Activated CD4-positive, alpha-beta T cell treated with anti-CD3 and anti-CD28 coated beads for 36 hours (primary cell): ENCODE measurements at regions of chr6 and their contacts with region 1.

Region 1: GRCh38 chr6:89952686-89953085 is 58.4 kb downstream of the GJA10 start:
- DNase-seq: peak; percentile 66
- ATAC-seq: peak; percentile 60
- H3K4me3 Mint-ChIP-seq: no peak overlapping the region
- H3K27ac Mint-ChIP-seq: peak overlapping the region; percentile 79
- H3K4me1 Mint-ChIP-seq: peaks cover 75% of the 10 kb centered on the region
- H3K27me3 Mint-ChIP-seq: no peaks in the 10 kb centered on the region

Region 2: GRCh38 chr6:89984926-89985750 is 32.5 kb after region 1 on chr6:
- CTCF ChIA-PET with region 1: interaction called, 4 read pairs
- POLR2A ChIA-PET with region 1: no interaction called
- intact Hi-C with region 1: loop called in 1 of 2 experiments (anchors 5 kb)
- DNase-seq: no peak
- ATAC-seq: no peak
- H3K4me3 Mint-ChIP-seq: no peak overlapping the region
- H3K27ac Mint-ChIP-seq: peak overlapping the region; percentile 68
- H3K4me1 Mint-ChIP-seq: peaks cover 72% of the 10 kb centered on the region
- H3K27me3 Mint-ChIP-seq: no peaks in the 10 kb centered on the region

Region 3: DNA sequence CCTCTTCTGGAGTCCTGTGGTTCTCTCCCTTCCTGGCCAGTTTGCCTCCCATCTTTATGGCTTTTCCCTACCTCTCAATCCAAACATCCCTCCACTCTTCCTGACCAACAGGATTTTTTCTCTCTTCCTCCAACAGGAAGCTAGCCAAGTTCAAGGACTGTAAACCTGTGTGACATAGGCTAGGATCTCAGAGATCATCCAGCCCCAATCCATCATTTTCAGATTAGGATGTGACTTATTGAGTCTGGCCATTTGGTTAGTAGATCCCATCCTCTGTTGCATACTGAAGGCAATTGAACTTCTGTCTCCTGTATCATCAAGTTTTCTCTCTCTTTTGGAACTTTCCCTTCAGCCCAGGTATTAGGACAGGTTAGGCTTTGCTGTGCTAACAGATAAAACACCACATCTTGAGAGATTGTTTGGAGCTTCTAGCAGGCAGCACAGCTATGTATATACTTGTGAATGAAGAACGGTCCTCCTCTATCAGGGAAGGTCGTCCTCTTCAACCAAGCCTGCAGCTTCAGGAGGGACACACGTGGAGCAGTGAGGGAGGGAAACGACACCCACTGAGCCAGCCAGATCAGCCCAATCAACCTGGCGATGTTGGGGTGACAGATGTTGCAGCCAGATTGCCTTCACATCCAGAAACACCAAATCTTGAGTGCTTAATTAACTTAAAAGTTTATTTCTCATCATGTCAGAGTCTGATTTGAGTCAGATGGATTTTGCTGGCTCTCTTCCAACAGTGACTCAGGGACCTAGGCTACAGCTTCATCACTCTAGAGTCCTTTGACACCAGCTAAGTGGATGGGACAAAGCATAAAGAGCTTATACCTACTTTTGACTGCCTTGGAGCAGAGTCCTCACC is 48.4 kb after region 1 on chr6:
- CTCF ChIA-PET with region 1: no interaction called
- POLR2A ChIA-PET with region 1: interaction called, 3 read pairs
- intact Hi-C with region 1: loop called in 1 of 2 experiments (anchors 2 kb)
- DNase-seq: peak; percentile 80
- ATAC-seq: peak; percentile 79
- H3K4me3 Mint-ChIP-seq: no peak overlapping the region
- H3K27ac Mint-ChIP-seq: no peak overlapping the region
- H3K4me1 Mint-ChIP-seq: peaks cover 35% of the 10 kb centered on the region
- H3K27me3 Mint-ChIP-seq: no peaks in the 10 kb centered on the region

Region 4: GRCh38 chr6:90008908-90009501 is 56.3 kb after region 1 on chr6:
- CTCF ChIA-PET with region 1: interaction called, 4 read pairs
- POLR2A ChIA-PET with region 1: interaction called, 8 read pairs
- intact Hi-C with region 1: loop called (anchors 1 to 2 kb)
- DNase-seq: peak; percentile 54
- ATAC-seq: peak; percentile 82
- H3K4me3 Mint-ChIP-seq: peak overlapping the region; percentile 18
- H3K27ac Mint-ChIP-seq: peak overlapping the region; percentile 95
- H3K4me1 Mint-ChIP-seq: peaks cover 68% of the 10 kb centered on the region
- H3K27me3 Mint-ChIP-seq: no peaks in the 10 kb centered on the region

Region 5: DNA sequence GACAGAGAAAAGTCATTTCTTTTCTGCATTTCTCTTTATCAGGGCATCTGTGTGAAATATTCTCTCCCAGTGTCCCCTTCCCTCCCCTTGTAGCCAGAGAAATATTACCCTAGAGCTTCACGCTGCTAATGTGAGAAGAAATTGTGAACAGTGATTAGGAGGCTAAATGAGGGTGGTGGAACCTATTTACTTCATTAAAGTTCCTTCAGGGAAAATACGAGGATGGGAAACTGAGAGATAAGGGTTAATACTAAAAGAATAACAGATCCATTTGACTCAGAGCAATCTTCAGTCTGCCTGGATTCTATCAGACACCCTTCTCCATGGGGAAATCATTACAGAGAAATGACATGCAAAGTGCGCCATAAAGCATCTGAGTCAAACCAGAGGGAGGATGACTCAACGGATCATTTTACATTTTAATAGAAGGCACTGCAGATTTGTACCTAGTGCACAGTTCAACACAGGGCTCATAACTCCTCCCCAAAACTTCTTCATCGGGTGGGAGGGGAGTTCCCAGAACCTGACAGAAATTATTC is 72.9 kb after region 1 on chr6:
- CTCF ChIA-PET with region 1: no interaction called
- POLR2A ChIA-PET with region 1: no interaction called
- intact Hi-C with region 1: loop called (anchors 2 kb)
- DNase-seq: peak; percentile 77
- ATAC-seq: peak; percentile 93
- H3K4me3 Mint-ChIP-seq: peak overlapping the region; percentile 22
- H3K27ac Mint-ChIP-seq: peak overlapping the region; percentile 90
- H3K4me1 Mint-ChIP-seq: peaks cover 88% of the 10 kb centered on the region
- H3K27me3 Mint-ChIP-seq: no peaks in the 10 kb centered on the region